ENCODE measurements at regions of chr18 and their contacts with region 1.

Region 1: DNA sequence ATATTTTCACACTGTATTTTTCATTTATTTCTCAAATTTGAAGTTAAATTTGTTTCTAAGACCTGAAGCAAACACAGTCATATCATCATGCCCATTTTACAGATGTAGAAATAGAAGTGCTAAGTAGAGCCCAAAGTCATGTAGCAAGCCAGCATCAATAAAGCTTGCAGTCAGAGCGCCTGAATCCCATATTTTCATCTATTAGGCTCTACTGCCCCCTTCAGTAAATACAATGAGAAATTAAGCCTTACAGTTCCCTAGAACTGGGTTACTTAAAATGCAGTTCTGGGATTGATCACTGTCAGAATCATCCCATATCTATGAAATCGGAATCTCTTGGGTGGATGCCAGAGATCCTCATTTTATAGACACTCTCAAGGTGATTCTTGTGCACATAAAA is 419.9 kb downstream of the TGIF1 start:
- DNase-seq: peak; percentile 27 to 53 (median 51)
- H3K4me3 ChIP-seq: no peak overlapping the region
- H3K4me3 Mint-ChIP-seq: no peak overlapping the region
- H3K27ac ChIP-seq: no peak overlapping the region
- H3K27ac Mint-ChIP-seq: no peak overlapping the region
- H3K4me1 ChIP-seq: peaks cover 19 to 23% of the 10 kb centered on the region in 2 donors
- H3K4me1 Mint-ChIP-seq: peaks cover 27% of the 10 kb centered on the region
- H3K27me3 ChIP-seq: no peaks in the 10 kb centered on the region
- H3K27me3 Mint-ChIP-seq: peaks cover 0 to 1% (median 0%) of the 10 kb centered on the region in 3 donors
- CTCF ChIP-seq: peak; percentile 71

Region 2: DNA sequence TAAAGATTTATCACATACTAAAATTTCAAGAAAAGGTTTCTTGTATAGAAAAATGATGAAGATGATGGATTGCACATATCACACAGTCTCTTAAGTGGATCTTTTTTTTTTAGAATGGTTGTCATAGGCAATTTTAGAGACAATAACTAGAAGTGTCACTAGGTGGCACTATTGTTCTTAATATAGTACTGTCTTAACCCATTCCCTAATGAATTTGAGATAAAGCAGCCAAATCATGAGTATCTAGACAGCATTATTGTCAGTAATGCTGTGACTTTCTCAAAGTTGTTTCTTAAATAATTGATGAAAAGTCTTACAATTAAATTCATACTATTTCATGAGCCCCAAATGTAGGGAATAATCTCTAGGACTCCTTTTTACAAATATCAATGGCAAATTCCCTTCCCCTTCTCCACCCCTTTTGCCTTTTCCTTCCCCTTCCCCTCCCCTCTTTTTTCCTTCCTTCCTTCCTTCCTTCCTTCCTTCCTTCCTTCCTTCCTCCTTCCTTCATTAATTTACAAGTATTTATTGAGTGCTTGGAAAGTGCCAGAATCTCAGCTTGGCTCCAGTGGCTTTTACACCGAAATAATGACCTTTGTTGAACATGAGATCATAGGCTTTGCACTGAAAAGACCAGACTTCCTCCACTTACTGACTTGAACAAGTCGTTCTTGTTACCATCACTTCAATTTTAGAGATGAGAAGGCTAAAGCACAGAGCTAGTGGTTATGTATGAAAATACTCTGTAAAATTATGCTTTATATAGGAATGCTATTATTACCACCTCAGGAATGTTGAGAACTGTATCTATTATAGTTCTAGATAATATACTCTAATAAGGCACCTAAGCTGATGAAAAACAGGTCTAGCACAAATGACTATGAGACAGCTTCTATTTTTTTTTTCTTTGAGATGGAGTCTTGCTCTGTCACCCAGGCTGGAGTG is 588.1 kb before region 1 on chr18:
- intact Hi-C with region 1: loop called (anchors 10 kb)
- DNase-seq: peak; percentile 57 to 90 (median 68)
- H3K4me3 ChIP-seq: no peak overlapping the region
- H3K4me3 Mint-ChIP-seq: no peak overlapping the region
- H3K27ac ChIP-seq: no peak overlapping the region
- H3K27ac Mint-ChIP-seq: no peak overlapping the region
- H3K4me1 ChIP-seq: peaks cover 17 to 25% of the 10 kb centered on the region in 2 donors
- H3K4me1 Mint-ChIP-seq: peaks cover 32% of the 10 kb centered on the region
- H3K27me3 ChIP-seq: no peaks in the 10 kb centered on the region
- H3K27me3 Mint-ChIP-seq: peaks cover 0 to 4% (median 0%) of the 10 kb centered on the region in 3 donors
- CTCF ChIP-seq: peak; percentile 82

Region 3: DNA sequence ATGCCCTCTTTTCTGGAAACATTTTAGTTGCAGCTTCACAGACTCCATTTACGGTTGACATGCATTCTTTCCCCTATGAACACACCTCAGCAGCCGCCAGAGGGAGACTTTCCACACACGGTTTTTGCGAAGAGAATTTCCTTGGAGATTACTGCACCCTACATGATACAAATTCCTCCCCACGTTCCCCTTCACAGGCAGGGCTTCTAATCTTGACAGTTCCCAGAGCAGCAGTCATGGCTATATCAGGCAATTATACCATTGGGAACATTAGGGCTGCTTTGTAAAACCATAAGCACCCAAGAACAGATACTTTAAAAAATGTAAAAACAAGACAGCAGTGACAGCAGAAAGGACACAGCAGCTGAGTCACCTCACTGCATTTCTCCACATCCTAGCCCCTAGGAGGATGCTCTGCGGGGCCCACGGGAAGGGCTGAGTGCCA is 166.1 kb before region 1 on chr18:
- intact Hi-C with region 1: loop called (anchors 5 to 10 kb)
- DNase-seq: peak; percentile 42 to 61 (median 43)
- H3K4me3 ChIP-seq: no peak overlapping the region
- H3K4me3 Mint-ChIP-seq: peak overlapping the region in 1 of 2 donors; percentile 43
- H3K27ac ChIP-seq: no peak overlapping the region
- H3K27ac Mint-ChIP-seq: peak overlapping the region in 2 of 7 donors; percentile 19 to 23
- H3K4me1 ChIP-seq: peaks cover 19 to 32% of the 10 kb centered on the region in 2 donors
- H3K4me1 Mint-ChIP-seq: peaks cover 28% of the 10 kb centered on the region
- H3K27me3 ChIP-seq: no peaks in the 10 kb centered on the region
- H3K27me3 Mint-ChIP-seq: peaks cover 0 to 2% (median 1%) of the 10 kb centered on the region in 3 donors
- CTCF ChIP-seq: peak; percentile 75

Region 4: GRCh38 chr18:3771121-3771971 is 98.5 kb before region 1 on chr18:
- intact Hi-C with region 1: loop called (anchors 5 to 10 kb)
- DNase-seq: peak; percentile 83 to 93 (median 91)
- H3K4me3 ChIP-seq: peak overlapping the region; percentile 3 to 64 (median 45)
- H3K4me3 Mint-ChIP-seq: peak overlapping the region; percentile 77 to 94
- H3K27ac ChIP-seq: no peak overlapping the region
- H3K27ac Mint-ChIP-seq: peak overlapping the region in 5 of 7 donors; percentile 19 to 83 (median 79)
- H3K4me1 ChIP-seq: peaks cover 9 to 13% of the 10 kb centered on the region in 2 donors
- H3K4me1 Mint-ChIP-seq: peaks cover 17% of the 10 kb centered on the region
- H3K27me3 ChIP-seq: peaks cover 2 to 6% of the 10 kb centered on the region in 2 donors
- H3K27me3 Mint-ChIP-seq: peaks cover 0 to 1% (median 0%) of the 10 kb centered on the region in 3 donors
- CTCF ChIP-seq: peak; percentile 98

Region 5: DNA sequence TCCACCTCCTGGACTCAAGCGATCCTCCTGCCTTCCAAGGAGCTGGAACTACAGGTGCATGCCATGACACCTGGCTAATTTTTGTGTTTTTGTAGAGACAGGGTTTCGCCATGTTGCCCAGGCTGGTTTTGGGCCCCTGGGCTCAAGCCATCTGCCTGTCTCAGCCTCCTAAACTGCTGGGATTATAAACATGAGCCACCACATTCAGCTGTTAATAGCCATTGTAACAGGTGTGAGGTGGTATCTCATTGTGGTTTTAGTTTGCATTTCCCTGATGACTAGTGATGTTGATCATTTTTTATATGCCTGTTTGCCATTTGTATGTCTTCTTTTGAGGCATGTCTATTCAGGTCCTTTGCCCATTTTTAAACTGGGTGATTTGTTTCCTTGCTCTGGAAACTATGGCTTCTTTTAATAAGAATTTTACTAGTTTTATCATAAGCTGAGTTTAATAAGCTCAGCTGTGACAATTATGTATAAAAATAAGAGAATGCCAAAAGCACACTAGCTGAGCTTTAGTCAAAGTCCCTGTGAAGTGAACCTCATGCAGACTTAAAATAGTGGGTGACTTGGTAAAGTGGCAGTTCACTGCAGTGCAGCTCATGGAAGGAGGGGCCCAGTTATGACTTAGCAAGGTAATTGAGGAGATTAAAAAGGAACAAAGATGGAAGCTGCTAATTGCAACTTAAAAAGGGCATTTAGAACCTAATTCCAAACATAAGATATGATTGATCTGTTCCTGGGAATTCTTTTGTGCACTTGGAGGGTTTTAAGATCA is 45.2 kb after region 1 on chr18:
- intact Hi-C with region 1: no loop called
- DNase-seq: no peak
- H3K4me3 ChIP-seq: no peak overlapping the region
- H3K4me3 Mint-ChIP-seq: no peak overlapping the region
- H3K27ac ChIP-seq: no peak overlapping the region
- H3K27ac Mint-ChIP-seq: no peak overlapping the region
- H3K4me1 ChIP-seq: no peaks in the 10 kb centered on the region
- H3K4me1 Mint-ChIP-seq: no peaks in the 10 kb centered on the region
- H3K27me3 ChIP-seq: no peaks in the 10 kb centered on the region
- H3K27me3 Mint-ChIP-seq: peaks cover 3 to 4% (median 3%) of the 10 kb centered on the region in 3 donors
- CTCF ChIP-seq: no peak

Region 6: DNA sequence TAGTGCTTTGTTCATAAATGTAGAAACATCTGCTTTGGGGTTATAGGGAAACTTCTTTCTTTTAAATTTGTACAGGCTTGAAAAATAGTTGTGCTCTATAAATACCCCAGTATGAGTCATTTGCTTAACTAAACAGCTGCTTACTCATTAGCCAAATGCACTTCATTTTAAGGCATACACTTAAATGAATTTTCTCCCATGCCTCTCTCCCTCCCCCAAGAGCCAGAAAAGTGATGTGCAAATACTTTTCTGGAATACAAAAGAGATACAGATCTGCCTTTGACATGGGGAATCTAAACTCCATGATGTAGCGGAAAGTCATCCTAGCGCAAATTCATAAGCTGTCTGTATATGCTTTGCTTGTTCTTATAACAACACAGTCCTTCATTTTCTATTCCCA is 115.8 kb after region 1 on chr18:
- intact Hi-C with region 1: no loop called
- DNase-seq: no peak
- H3K4me3 ChIP-seq: no peak overlapping the region
- H3K4me3 Mint-ChIP-seq: no peak overlapping the region
- H3K27ac ChIP-seq: no peak overlapping the region
- H3K27ac Mint-ChIP-seq: no peak overlapping the region
- H3K4me1 ChIP-seq: no peaks in the 10 kb centered on the region
- H3K4me1 Mint-ChIP-seq: peaks cover 5% of the 10 kb centered on the region
- H3K27me3 ChIP-seq: no peaks in the 10 kb centered on the region
- H3K27me3 Mint-ChIP-seq: peaks cover 0 to 3% (median 3%) of the 10 kb centered on the region in 3 donors
- CTCF ChIP-seq: no peak